PC-9 (cell line): ENCODE measurements at regions of chr19 and their contacts with region 1.

Region 1: GRCh38 chr19:39031368-39032062 is 834 bp downstream of the FBXO27 start:
- DNase-seq: peak; percentile 94 to 99
- H3K4me3 ChIP-seq: peak overlapping the region; percentile 77
- H3K27ac ChIP-seq: peak overlapping the region; percentile 76
- H3K4me1 ChIP-seq: peaks cover 25% of the 10 kb centered on the region
- H3K27me3 ChIP-seq: no peaks in the 10 kb centered on the region
- CTCF ChIP-seq: no peak

Region 2: DNA sequence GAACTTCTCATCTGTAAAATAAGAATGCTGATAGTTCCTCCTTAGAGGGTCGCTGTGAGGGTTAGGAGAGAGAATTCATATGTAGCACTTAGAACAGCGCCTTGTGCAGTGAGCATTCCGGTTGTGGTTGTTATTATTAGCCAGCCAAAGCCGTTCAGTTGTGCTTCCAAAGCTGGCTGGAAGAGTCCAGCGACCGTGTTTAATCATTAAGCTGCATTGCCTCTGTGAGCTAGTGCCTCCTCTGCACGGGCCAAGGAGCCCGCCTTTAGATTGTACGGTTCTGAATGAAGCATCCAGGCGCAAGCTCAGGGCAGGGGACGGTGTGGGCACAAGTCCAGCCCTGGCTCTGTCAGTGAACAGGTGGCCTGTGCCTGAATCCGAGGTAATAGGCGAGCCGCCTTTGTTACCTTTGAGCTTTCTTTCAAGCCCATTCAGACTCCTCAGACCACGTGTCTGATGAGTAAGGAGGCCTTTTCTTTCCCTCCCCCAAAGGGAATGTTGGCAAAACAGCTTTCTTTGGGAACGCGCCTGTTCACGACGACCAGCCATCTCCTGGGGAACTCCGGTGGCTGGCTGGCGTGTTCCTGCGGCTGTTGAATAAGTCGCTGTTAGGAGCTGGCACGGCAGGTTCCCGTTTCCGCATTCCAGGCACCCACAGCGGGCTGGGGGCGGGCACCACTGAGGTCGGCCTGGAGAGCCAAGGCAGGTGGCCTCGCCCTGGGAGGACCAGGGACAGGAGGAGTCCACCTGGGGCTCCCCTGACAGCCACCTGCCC is 1099.4 kb before region 1 on chr19:
- CTCF ChIA-PET with region 1: interaction called, 15 read pairs
- POLR2A ChIA-PET with region 1: no interaction called
- intact Hi-C with region 1: no loop called
- DNase-seq: peak; percentile 92 to 95
- H3K4me3 ChIP-seq: peak overlapping the region; percentile 44
- H3K27ac ChIP-seq: peak overlapping the region; percentile 74
- H3K4me1 ChIP-seq: peaks cover 62% of the 10 kb centered on the region
- H3K27me3 ChIP-seq: no peaks in the 10 kb centered on the region
- CTCF ChIP-seq: no peak

Region 3: GRCh38 chr19:38351865-38352395 is 679.6 kb before region 1 on chr19:
- CTCF ChIA-PET with region 1: no interaction called
- POLR2A ChIA-PET with region 1: interaction called, 25 read pairs
- intact Hi-C with region 1: no loop called
- DNase-seq: no peak
- H3K4me3 ChIP-seq: no peak overlapping the region
- H3K27ac ChIP-seq: no peak overlapping the region
- H3K4me1 ChIP-seq: no peaks in the 10 kb centered on the region
- H3K27me3 ChIP-seq: no peaks in the 10 kb centered on the region
- CTCF ChIP-seq: no peak

Region 4: DNA sequence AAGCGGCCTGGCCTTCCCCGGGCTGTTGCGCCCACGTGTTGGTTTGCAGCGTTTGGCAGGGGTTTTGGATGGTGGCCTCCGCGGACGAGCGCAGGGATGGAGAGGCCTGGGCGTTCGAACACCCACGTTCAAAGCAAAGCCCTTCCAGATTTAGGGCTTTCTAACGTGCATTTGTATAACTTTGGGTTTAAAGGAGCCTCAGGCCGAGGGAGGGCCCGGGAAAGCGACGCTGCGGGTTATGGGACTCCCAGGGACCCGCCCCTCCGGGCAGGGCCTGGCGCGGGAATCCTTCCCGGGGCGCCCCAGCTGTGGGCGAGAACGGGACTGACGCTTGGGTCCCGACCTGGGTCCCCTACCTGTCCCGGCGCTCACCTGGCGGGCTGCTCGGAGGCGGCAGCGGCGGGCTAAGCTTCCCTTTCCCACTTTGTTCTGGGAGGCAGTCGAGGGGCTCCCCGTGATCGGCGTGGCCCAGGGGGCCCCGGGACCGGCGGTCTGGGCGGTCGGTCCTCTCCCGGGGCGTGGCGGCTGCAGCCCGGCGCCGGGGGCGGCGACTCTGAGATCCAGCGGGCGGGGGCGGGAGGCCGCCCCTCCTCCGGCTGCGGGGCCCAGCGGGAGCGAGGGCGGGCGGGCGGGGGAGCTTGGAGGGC is 56.2 kb before region 1 on chr19 and contains the start of gene FBXO17:
- CTCF ChIA-PET with region 1: interaction called, 3 read pairs
- POLR2A ChIA-PET with region 1: interaction called, 4 read pairs
- intact Hi-C with region 1: loop called (anchors 5 kb)
- DNase-seq: peak in 1 of 2 experiments; percentile 54
- H3K4me3 ChIP-seq: peak within 1 kb of the TSS; percentile 57; the same call in 1 of the 2 replicates
- H3K27ac ChIP-seq: no peak within 1 kb of the TSS
- H3K4me1 ChIP-seq: no peaks in the 10 kb centered on the region
- H3K27me3 ChIP-seq: 0 out of 2 replicates have a peak, but pooled peaks cover 5% of the 10 kb centered on the region
- CTCF ChIP-seq: no peak
- total RNA-seq, gene FBXO17: 8.1 and 11.1 TPM in 2 replicates

Region 5: GRCh38 chr19:38989066-38989605 is 42.4 kb before region 1 on chr19:
- CTCF ChIA-PET with region 1: no interaction called
- POLR2A ChIA-PET with region 1: interaction called, 23 read pairs
- intact Hi-C with region 1: no loop called
- DNase-seq: peak; percentile 69 to 79
- H3K4me3 ChIP-seq: no peak overlapping the region; the same call in 1 of the 2 replicates
- H3K27ac ChIP-seq: peak overlapping the region; percentile 29; the same call in 1 of the 2 replicates
- H3K4me1 ChIP-seq: peaks cover 9% of the 10 kb centered on the region
- H3K27me3 ChIP-seq: no peaks in the 10 kb centered on the region
- CTCF ChIP-seq: no peak

Region 6: GRCh38 chr19:39341719-39342604 is 310.4 kb after region 1 on chr19 and contains the start of gene SAMD4B:
- CTCF ChIA-PET with region 1: no interaction called
- POLR2A ChIA-PET with region 1: interaction called, 5 read pairs
- intact Hi-C with region 1: loop called (anchors 5 kb)
- DNase-seq: peak; percentile 87 to 99
- H3K4me3 ChIP-seq: peak within 1 kb of the TSS; percentile 89
- H3K27ac ChIP-seq: peak within 1 kb of the TSS; percentile 34
- H3K4me1 ChIP-seq: peaks cover 16% of the 10 kb centered on the region
- H3K27me3 ChIP-seq: no peaks in the 10 kb centered on the region
- CTCF ChIP-seq: peak; percentile 65
- total RNA-seq, gene SAMD4B: 152 and 163 TPM in 2 replicates